ENCODE measurements at regions of chr9 and their contacts with region 1.

Region 1: GRCh38 chr9:26310294-26310693 is 582.3 kb downstream of the CAAP1 start:
- DNase-seq: no peak
- H3K4me3 ChIP-seq: no peak overlapping the region
- CTCF ChIP-seq: no peak
- POLR2A ChIP-seq: no peak

Region 2: DNA sequence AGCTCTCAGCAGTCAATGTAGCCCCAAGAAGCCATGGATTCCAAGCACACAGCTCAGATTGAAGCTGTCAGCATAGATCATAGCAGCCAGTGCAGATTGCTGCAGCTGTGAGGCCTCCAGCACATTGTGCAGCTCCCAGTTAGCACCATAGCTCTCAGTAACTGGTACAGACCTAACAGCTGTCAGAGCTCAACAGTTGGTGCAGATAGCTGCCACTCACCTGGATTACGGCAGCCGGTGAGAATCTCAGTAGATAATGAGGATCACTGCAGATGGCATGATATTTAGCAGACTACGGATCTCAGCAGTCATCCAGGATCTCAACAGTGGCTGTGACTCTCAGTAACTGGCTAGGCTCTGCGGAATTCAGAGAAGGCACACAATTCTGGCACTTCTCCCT is 1132.4 kb before region 1 on chr9:
- intact Hi-C with region 1: loop called (anchors 10 kb)
- DNase-seq: no peak
- H3K4me3 ChIP-seq: no peak overlapping the region
- CTCF ChIP-seq: no peak
- POLR2A ChIP-seq: no peak

Region 3: DNA sequence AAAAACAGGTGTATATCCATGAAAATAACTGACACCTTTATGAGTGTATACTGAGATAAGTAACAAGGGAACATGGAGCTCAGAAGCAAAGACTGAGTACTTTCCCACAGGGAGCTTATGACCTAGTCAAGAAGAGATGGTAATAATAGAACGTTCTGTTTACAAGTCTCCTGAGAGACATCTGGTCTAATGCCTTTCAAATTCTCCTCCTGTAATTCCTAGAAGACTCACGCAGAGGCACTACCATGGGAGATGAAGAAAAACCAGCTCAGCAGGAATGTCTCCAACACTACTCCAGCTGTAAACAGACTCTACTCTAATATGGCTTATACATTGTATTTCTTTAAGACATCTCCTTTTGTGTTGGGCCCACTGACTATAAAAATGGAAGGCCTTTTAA is 128.5 kb before region 1 on chr9:
- intact Hi-C with region 1: no loop called
- DNase-seq: no peak
- H3K4me3 ChIP-seq: no peak overlapping the region
- CTCF ChIP-seq: no peak
- POLR2A ChIP-seq: no peak

Measured in lower leg skin (tissue), 4 donors.